Activated T-helper 1 cell treated with anti-CD3 and anti-CD28 coated beads, Interleukin-12 subunit alpha, Interleukin-12 subunit beta, Interleukin-2, Interleukin-4 antibody, amounts not matched to agents 30 ng/mL and 10 ng/mL and 1 ng/mL, durations not matched to agents 14 hours and 24 hours and 36 hours (primary cell): ENCODE measurements at regions of chr1 and their contacts with region 1.

Region 1: GRCh38 chr1:172745014-172745413 is 86.1 kb downstream of the FASLG start:
- DNase-seq: peak; percentile 34
- H3K4me3 Mint-ChIP-seq: no peak overlapping the region
- H3K27ac Mint-ChIP-seq: no peak overlapping the region
- H3K4me1 Mint-ChIP-seq: peaks cover 27% of the 10 kb centered on the region
- H3K27me3 Mint-ChIP-seq: peaks cover 45% of the 10 kb centered on the region

Region 2: DNA sequence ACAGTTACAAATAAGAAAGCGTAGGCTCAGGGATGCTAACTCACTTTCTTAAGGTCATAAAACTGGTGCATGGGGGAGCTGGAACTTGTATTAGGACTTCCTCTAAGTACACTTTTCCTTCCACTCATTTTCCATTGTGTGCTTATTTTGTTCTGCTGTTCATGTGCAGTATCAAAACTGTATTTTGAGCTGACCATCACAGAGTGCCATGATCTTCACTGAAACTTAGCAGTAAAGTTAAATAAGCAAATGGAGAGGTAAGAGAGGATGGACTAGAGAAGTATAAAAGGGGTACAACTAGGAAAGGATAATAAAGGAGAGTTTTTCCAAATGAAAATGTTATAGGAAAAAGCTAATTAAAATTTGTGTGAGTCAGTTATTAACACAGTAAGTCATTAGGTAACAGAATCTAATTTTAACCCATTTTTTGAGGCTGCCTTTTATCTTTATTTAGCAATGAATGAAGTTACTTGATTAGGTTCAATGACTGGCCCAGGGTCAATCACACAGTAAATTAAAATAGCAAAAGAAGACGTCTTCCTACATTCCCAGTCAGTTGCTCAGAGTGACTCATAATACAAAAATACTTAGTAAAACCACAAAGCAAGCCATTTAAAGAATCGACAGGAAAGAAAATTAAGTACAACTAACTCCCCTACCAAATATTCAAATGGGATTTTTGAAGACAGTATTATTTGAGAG is 490.3 kb before region 1 on chr1:
- intact Hi-C with region 1: no loop called
- DNase-seq: no peak
- H3K4me3 Mint-ChIP-seq: peak overlapping the region; percentile 15
- H3K27ac Mint-ChIP-seq: peak overlapping the region; percentile 86
- H3K4me1 Mint-ChIP-seq: peaks cover 28% of the 10 kb centered on the region
- H3K27me3 Mint-ChIP-seq: peaks cover 3% of the 10 kb centered on the region

Region 3: DNA sequence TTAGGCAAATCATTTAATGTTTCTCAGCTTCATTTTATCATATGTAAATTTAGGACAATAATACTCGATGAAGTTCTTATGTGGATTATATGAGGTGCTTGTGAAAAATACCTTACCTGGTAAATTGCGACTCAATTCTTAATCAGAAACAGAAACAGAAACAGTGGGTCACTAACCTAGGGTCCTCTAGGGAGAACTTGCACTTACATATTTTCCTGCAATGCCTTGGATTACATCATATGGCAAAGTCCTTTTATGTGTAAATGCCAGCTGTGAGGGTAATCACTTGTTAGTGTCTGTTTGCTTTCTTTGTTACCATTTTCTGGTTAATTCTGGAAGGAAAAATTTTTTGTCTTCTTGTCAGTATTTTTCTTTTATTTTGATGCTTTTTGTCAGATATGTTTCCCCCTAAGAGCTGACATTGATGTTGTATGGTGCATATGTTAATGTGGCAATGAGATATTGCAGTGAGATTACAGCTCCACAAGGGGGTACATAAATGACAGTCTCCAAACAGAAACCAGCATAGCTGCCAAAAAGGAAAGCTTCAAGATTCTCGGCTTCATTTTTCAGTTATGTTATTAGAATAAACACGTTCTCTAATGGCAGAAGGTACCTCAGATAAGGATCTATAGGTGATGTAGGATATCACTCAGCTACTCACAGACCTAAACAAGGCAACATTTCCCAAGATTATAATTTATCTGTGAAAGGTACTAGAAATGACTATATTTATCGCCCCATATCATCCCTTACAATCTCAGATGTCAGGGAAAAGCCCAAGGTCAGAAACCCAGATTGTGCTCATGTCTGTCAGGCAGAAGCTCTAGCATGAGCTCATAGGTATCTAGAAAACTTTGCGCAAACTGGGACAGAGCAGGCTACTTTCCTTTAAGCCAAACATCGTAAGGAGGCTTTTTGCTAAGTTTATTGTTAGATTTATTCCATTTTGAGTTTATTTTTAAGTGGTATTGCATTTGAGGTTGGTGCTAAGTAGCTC is 33.7 kb after region 1 on chr1:
- intact Hi-C with region 1: loop called (anchors 1 kb)
- DNase-seq: no peak
- H3K4me3 Mint-ChIP-seq: no peak overlapping the region
- H3K27ac Mint-ChIP-seq: no peak overlapping the region
- H3K4me1 Mint-ChIP-seq: peaks cover 11% of the 10 kb centered on the region
- H3K27me3 Mint-ChIP-seq: peaks cover 21% of the 10 kb centered on the region

Region 4: GRCh38 chr1:172870901-172871606 is 126.0 kb after region 1 on chr1:
- intact Hi-C with region 1: loop called (anchors 2 kb)
- DNase-seq: no peak
- H3K4me3 Mint-ChIP-seq: no peak overlapping the region
- H3K27ac Mint-ChIP-seq: no peak overlapping the region
- H3K4me1 Mint-ChIP-seq: peaks cover 32% of the 10 kb centered on the region
- H3K27me3 Mint-ChIP-seq: peaks cover 39% of the 10 kb centered on the region

Region 5: GRCh38 chr1:173043253-173043652 is 298.2 kb after region 1 on chr1:
- intact Hi-C with region 1: loop called (anchors 10 kb)
- DNase-seq: no peak
- H3K4me3 Mint-ChIP-seq: no peak overlapping the region
- H3K27ac Mint-ChIP-seq: no peak overlapping the region
- H3K4me1 Mint-ChIP-seq: peaks cover 20% of the 10 kb centered on the region
- H3K27me3 Mint-ChIP-seq: peaks cover 2% of the 10 kb centered on the region

Region 6: DNA sequence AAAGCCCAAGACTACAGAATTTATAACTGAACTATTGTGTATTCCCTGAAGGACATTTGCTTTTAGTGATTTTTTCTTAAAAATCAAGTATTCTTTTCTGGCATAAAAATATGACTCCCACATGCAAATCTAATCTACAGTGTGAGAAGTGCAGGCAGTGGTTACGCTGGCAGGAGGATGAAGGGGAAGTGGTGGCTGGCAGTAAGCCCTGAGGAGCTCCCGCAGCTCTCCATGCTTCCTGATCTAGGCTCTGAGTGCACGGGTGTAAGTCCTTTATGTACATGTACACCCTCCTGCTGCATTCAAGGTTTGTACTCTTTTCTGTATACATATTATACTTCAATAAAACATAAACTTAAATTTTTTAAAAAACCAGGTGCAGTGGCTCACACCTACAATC is 664.6 kb after region 1 on chr1:
- intact Hi-C with region 1: loop called (anchors 1 kb)
- DNase-seq: no peak
- H3K4me3 Mint-ChIP-seq: no peak overlapping the region
- H3K27ac Mint-ChIP-seq: no peak overlapping the region
- H3K4me1 Mint-ChIP-seq: peaks cover 19% of the 10 kb centered on the region
- H3K27me3 Mint-ChIP-seq: peaks cover 4% of the 10 kb centered on the region

Region 7: GRCh38 chr1:173824331-173825081 is 1079.5 kb after region 1 on chr1 and contains the starts of genes CENPL and DARS2:
- intact Hi-C with region 1: loop called (anchors 1 kb)
- DNase-seq: peak; percentile 90
- H3K4me3 Mint-ChIP-seq: peak within 1 kb of the TSS; percentile 91
- H3K27ac Mint-ChIP-seq: peak within 1 kb of the TSS; percentile 95
- H3K4me1 Mint-ChIP-seq: peaks cover 48% of the 10 kb centered on the region
- H3K27me3 Mint-ChIP-seq: no peaks in the 10 kb centered on the region
- total RNA-seq, gene CENPL: 23.6 and 25.7 TPM in 2 replicates
- total RNA-seq, gene DARS2: 41.9 TPM in 2 replicates

Region 8: GRCh38 chr1:174743654-174744561 is 1998.9 kb after region 1 on chr1:
- intact Hi-C with region 1: loop called (anchors 5 kb)
- DNase-seq: no peak
- H3K4me3 Mint-ChIP-seq: no peak overlapping the region
- H3K27ac Mint-ChIP-seq: no peak overlapping the region
- H3K4me1 Mint-ChIP-seq: no peaks in the 10 kb centered on the region
- H3K27me3 Mint-ChIP-seq: peaks cover 2% of the 10 kb centered on the region